ENCODE measurements at regions of chr9 and their contacts with region 1.

Region 1: GRCh38 chr9:112028280-112029221 is 131.9 kb downstream of the UGCG start:
- DNase-seq: peak; percentile 98
- ATAC-seq: peak; percentile 63
- H3K4me3 ChIP-seq: peak overlapping the region; percentile 63
- H3K27ac ChIP-seq: peak overlapping the region; percentile 97
- H3K4me1 ChIP-seq: peaks cover 38% of the 10 kb centered on the region
- H3K27me3 ChIP-seq: no peaks in the 10 kb centered on the region
- CTCF ChIP-seq: no peak
- EP300 ChIP-seq: peak; percentile 98 to 99
- POLR2A ChIP-seq: peak; percentile 84
- RAD21 ChIP-seq: peak; percentile 41

Region 2: DNA sequence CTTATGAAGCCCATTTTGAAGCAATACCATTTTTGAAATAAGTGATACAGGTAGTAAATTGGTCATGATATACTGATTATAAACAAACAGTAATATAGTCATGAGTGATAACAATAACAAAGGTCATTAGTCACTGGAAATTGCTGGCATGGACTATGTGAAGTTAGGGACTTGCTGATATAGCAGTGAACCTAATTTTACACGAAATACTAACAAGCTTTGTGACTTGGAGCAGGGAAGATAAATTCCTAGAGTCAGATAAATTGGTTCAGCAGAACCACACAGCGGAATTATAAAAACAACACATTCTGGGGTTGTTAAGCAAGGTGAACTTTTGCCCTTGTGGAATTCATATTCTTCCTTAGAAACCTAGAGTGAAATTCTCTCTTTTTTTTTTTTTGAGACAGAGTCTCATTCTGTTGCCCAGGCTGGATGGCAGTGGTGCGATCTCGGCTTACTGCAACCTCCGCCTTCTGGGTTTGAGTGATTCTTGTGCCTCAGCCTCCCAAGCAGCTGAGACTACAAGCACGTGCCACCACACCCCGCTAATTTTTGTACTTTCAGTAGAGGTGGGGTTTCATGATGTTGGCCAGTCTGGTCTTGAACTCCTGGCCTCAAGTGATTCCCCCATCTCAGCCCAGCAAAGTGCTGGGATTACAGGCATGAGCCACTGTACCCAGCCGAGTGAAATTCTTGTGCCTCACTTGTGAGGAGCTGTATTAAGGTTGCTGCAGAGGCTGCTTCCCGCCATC is 126.0 kb before region 1 on chr9:
- CTCF ChIA-PET with region 1: interaction called, 4 read pairs
- POLR2A ChIA-PET with region 1: interaction called, 4 read pairs
- RAD21 ChIA-PET with region 1: interaction called, 26 read pairs
- SMC1A ChIA-PET with region 1: interaction called, 11 read pairs
- in situ Hi-C with region 1: no loop called
- intact Hi-C with region 1: loop called (anchors 2 kb)
- DNase-seq: no peak
- ATAC-seq: no peak
- H3K4me3 ChIP-seq: peak overlapping the region; percentile 80; the same call in 1 of the 2 replicates
- H3K27ac ChIP-seq: peak overlapping the region; percentile 37; the same call in 1 of the 2 replicates
- H3K4me1 ChIP-seq: peaks cover 26% of the 10 kb centered on the region
- H3K27me3 ChIP-seq: no peaks in the 10 kb centered on the region
- CTCF ChIP-seq: no peak
- EP300 ChIP-seq: no peak
- POLR2A ChIP-seq: no peak
- RAD21 ChIP-seq: no peak

Region 3: GRCh38 chr9:111916234-111916645 is 112.3 kb before region 1 on chr9:
- CTCF ChIA-PET with region 1: interaction called, 3 read pairs
- POLR2A ChIA-PET with region 1: no interaction called
- RAD21 ChIA-PET with region 1: interaction called, 23 read pairs
- SMC1A ChIA-PET with region 1: interaction called, 10 read pairs
- in situ Hi-C with region 1: no loop called
- intact Hi-C with region 1: no loop called
- DNase-seq: no peak
- ATAC-seq: peak; percentile 67
- H3K4me3 ChIP-seq: peak overlapping the region; percentile 54; the same call in 1 of the 2 replicates
- H3K27ac ChIP-seq: peak overlapping the region; percentile 76
- H3K4me1 ChIP-seq: peaks cover 47% of the 10 kb centered on the region
- H3K27me3 ChIP-seq: no peaks in the 10 kb centered on the region
- CTCF ChIP-seq: no peak
- EP300 ChIP-seq: peak; percentile 42 to 60; a peak in 3 of 4 replicates
- POLR2A ChIP-seq: no peak
- RAD21 ChIP-seq: no peak

Region 4: DNA sequence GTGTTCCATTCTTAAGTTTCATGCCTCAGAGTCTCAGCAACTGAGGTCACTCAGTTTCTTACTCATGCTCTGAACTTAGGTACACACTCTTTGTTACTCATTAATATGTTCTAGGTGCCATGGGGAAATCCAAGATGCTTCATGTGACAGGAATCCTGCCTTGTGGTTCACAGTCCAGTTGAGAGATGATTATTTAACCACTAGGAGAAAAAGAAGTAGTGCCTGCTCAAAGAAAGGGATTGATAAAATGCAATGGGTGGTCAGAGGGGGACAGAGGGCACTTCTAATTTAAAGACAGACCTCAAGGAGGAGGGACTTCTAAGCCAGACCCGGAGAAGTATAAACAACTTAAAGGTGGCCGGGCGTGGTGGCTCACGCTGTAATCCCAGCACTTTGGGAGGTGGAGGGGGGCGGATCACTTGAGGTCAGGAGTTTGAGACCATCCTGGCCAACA is 63.0 kb before region 1 on chr9:
- CTCF ChIA-PET with region 1: interaction called, 3 read pairs
- POLR2A ChIA-PET with region 1: interaction called, 5 read pairs
- RAD21 ChIA-PET with region 1: interaction called, 12 read pairs
- SMC1A ChIA-PET with region 1: interaction called, 14 read pairs
- in situ Hi-C with region 1: no loop called
- intact Hi-C with region 1: no loop called
- DNase-seq: peak; percentile 90
- ATAC-seq: peak; percentile 80
- H3K4me3 ChIP-seq: no peak overlapping the region
- H3K27ac ChIP-seq: peak overlapping the region; percentile 56
- H3K4me1 ChIP-seq: peaks cover 25% of the 10 kb centered on the region
- H3K27me3 ChIP-seq: no peaks in the 10 kb centered on the region
- CTCF ChIP-seq: no peak
- EP300 ChIP-seq: peak; percentile 82 to 89
- POLR2A ChIP-seq: no peak
- RAD21 ChIP-seq: 0 out of 2 replicates have a peak, but pooled peaks have one; percentile 3

Region 5: GRCh38 chr9:112050544-112051475 is 22.3 kb after region 1 on chr9:
- CTCF ChIA-PET with region 1: interaction called, 3 read pairs
- POLR2A ChIA-PET with region 1: interaction called, 36 read pairs
- RAD21 ChIA-PET with region 1: interaction called, 56 read pairs
- SMC1A ChIA-PET with region 1: interaction called, 48 read pairs
- in situ Hi-C with region 1: no loop called
- intact Hi-C with region 1: no loop called
- DNase-seq: no peak
- ATAC-seq: no peak
- H3K4me3 ChIP-seq: no peak overlapping the region
- H3K27ac ChIP-seq: no peak overlapping the region
- H3K4me1 ChIP-seq: peaks cover 31% of the 10 kb centered on the region
- H3K27me3 ChIP-seq: no peaks in the 10 kb centered on the region
- CTCF ChIP-seq: no peak
- EP300 ChIP-seq: no peak
- POLR2A ChIP-seq: no peak
- RAD21 ChIP-seq: no peak

Measured in GM12878 (cell line).